SK-N-SH (cell line): ENCODE measurements at regions of chr3 and their contacts with region 1.

Region 1: GRCh38 chr3:158727206-158728060 is 4.8 kb downstream of the RARRES1 start:
- DNase-seq: peak; percentile 75
- H3K4me3 ChIP-seq: no peak overlapping the region; a peak in 1 of 4 replicates
- H3K27ac ChIP-seq: no peak overlapping the region
- H3K4me1 ChIP-seq: peaks cover 17 to 20% of the 10 kb centered on the region in 2 experiments; a peak in 3 of 4 replicates
- H3K27me3 ChIP-seq: no peaks in the 10 kb centered on the region
- CTCF ChIP-seq: peak; percentile 88
- EP300 ChIP-seq: no peak
- RAD21 ChIP-seq: peak; percentile 79

Region 2: DNA sequence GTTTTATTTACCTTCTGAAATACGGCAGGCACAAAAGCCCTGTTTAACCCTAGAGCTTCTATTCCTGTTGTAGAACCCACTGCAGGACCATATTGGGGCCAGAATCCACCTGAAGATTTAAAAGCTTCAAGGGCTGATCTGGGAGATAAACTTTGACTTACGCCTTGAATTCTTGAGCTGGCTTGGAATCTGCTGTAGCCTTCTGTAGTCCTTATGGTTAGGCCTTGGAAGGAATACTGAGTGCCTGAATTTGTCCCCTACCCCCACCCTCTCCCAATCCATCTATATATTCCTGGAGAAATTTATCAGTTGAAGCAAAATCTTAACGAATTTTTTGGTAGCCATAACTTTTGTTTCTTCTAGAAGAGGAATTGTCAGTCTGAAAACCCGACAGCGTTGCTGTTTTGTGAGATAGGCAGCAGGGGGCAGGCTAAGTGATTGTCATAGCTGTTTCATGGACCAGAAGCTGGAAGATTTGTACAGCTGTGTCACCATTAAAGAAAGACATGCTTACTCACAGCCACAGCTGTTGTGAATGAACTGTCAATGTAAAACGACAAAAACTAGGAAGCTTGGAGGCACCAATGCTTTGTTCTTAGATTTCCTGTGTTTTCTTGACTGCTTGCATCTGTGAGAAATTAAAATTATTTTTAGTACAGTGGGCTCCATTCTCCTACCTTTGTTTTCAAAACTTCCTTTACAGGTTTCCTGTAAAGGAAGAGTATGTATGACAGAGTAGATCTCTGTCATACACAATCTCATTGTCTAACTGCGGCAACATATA is 67.8 kb before region 1 on chr3:
- CTCF ChIA-PET with region 1: interaction called, 14 read pairs
- POLR2A ChIA-PET with region 1: no interaction called
- DNase-seq: peak; percentile 61
- H3K4me3 ChIP-seq: no peak overlapping the region; a peak in 1 of 4 replicates
- H3K27ac ChIP-seq: peak overlapping the region in 1 of 2 experiments; percentile 28; a peak in 2 of 4 replicates
- H3K4me1 ChIP-seq: no peaks in the 10 kb centered on the region
- H3K27me3 ChIP-seq: no peaks in the 10 kb centered on the region
- CTCF ChIP-seq: peak; percentile 84
- EP300 ChIP-seq: no peak
- RAD21 ChIP-seq: peak; percentile 64

Region 3: GRCh38 chr3:158742871-158743663 is 15.6 kb after region 1 on chr3:
- CTCF ChIA-PET with region 1: interaction called, 33 read pairs
- POLR2A ChIA-PET with region 1: no interaction called
- DNase-seq: no peak
- H3K4me3 ChIP-seq: no peak overlapping the region
- H3K27ac ChIP-seq: no peak overlapping the region
- H3K4me1 ChIP-seq: peaks cover 6 to 18% of the 10 kb centered on the region in 2 experiments; a peak in 3 of 4 replicates
- H3K27me3 ChIP-seq: no peaks in the 10 kb centered on the region
- CTCF ChIP-seq: no peak
- EP300 ChIP-seq: peak in 1 of 2 experiments; percentile 27; a peak in 1 of 4 replicates
- RAD21 ChIP-seq: no peak

Region 4: DNA sequence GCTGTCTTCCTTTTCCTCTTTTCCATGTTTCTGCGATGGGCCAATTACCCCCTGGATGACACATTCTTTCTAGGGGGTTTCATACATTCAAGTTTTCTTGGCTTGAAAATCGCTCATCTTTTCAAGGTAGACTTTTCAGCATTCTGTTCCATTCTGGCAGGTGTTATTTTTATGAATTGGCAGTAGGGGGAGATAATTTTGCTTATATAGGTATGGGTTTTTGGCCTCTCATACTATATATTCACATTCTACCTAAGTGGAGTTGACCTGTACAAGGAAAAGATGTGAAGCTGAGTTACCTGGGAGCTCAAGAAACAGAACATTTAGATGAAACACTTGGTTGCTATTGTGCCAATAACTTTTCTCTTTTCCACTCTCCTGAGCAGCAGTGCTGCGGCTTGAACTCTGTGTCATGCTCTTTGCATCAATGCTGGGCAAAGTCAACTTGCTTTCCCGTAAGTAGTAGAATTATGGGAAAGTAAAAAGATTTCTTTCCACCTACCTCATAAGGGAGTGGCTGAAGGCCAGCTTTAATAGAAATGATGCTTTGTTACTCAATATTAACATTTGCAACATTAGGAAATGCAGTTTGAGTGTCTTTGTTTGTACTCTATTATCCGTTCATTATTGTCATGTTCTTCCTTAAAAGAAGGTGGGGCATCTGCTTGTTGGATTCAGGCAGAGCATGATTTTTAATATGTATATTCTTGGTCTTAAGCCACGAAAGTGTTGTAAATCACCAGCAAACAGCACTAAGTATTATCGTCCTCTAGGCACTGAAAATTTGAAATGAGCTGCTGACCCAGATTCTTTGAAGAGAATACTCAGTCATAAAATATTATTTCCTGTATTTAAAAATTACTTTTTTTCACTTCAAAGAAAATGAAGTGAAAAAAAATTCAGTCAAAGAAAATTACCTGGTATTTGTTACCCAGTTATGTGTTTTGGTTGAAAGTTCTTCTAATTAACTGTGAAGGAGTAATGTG is 46.7 kb after region 1 on chr3:
- CTCF ChIA-PET with region 1: interaction called, 29 read pairs
- POLR2A ChIA-PET with region 1: no interaction called
- DNase-seq: no peak
- H3K4me3 ChIP-seq: no peak overlapping the region
- H3K27ac ChIP-seq: peak overlapping the region in 1 of 2 experiments; percentile 13; a peak in 1 of 4 replicates
- H3K4me1 ChIP-seq: peaks cover 0 to 12% of the 10 kb centered on the region in 2 experiments; a peak in 3 of 4 replicates
- H3K27me3 ChIP-seq: no peaks in the 10 kb centered on the region
- CTCF ChIP-seq: no peak
- EP300 ChIP-seq: no peak
- RAD21 ChIP-seq: no peak

Region 5: GRCh38 chr3:158801696-158802408 is 74.4 kb after region 1 on chr3 and contains the start of gene MFSD1:
- CTCF ChIA-PET with region 1: interaction called, 19 read pairs
- POLR2A ChIA-PET with region 1: interaction called, 3 read pairs
- DNase-seq: peak; percentile 94
- H3K4me3 ChIP-seq: peak within 1 kb of the TSS; percentile 87 to 95
- H3K27ac ChIP-seq: peak within 1 kb of the TSS; percentile 58 to 62; a peak in 3 of 4 replicates
- H3K4me1 ChIP-seq: peaks cover 8 to 14% of the 10 kb centered on the region in 2 experiments; a peak in 3 of 4 replicates
- H3K27me3 ChIP-seq: no peaks in the 10 kb centered on the region
- CTCF ChIP-seq: no peak
- EP300 ChIP-seq: peak in 1 of 2 experiments; percentile 38; a peak in 1 of 4 replicates
- RAD21 ChIP-seq: no peak
- polyA plus RNA-seq, gene MFSD1: 44.9 and 70.4 TPM in 2 replicates